HEK293 (cell line): ENCODE measurements at regions of chr17 and their contacts with region 1.

Region 1: DNA sequence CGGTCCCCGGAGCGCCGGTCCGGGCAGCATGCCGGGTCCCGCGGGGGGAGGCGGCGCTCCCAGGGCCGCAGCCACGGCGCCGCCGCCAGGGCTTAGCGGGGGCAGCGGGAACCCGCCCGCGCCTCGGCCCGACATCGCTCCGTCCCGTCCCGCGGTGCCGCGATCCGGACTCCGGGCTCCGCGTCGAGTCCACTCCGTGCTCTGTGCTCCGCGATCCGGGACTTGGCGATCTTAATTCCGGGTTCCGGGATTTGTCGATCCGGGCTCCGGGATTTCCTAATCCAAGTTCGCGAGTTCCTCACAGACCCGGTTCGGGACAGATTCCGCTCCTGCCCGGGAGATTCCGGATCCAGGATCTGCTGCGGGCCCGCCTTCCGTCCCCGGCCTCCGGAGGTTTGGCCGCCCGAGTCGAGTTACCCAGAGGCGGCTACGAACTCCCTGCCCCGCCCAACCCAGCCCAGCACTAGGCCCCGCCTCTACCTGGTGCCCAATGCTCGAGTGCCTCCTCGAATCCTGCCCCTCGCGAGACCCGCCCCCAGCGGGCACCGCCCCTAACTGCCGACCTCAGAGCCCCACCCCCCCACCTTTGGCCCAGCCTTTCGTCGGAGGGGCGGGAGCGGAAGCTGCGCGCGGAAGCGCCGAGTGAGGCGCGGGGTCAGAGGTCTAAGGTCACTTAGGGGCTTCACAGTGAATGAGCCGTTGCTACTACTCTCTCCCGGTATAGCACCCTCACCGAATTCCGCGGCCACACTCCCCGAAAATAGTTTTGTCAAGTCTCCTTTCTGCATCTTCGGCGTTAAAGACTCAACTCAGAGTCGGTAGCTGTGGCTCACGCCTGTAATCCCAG is at the start of gene SMARCD2:
- H3K4me3 ChIP-seq: peak within 1 kb of the TSS; percentile 93
- H3K27ac ChIP-seq: peak within 1 kb of the TSS; percentile 97
- H3K4me1 ChIP-seq: peaks cover 20% of the 10 kb centered on the region
- CTCF ChIP-seq: peak; percentile 55; the same call in 1 of the 2 replicates

Region 2: GRCh38 chr17:63600569-63601438 is 242.0 kb before region 1 on chr17 and contains the start of gene TACO1:
- CTCF ChIA-PET with region 1: no interaction called
- POLR2A ChIA-PET with region 1: no interaction called
- H3K4me3 ChIP-seq: peak within 1 kb of the TSS; percentile 92
- H3K27ac ChIP-seq: peak within 1 kb of the TSS; percentile 75
- H3K4me1 ChIP-seq: no peaks in the 10 kb centered on the region
- CTCF ChIP-seq: no peak; the same call in 1 of the 2 replicates

Region 3: GRCh38 chr17:63827002-63827771 is 15.6 kb before region 1 on chr17 and contains the starts of genes FTSJ3 and PSMC5:
- CTCF ChIA-PET with region 1: interaction called, 10 read pairs
- POLR2A ChIA-PET with region 1: interaction called, 65 read pairs
- H3K4me3 ChIP-seq: peak within 1 kb of the TSS; percentile 74
- H3K27ac ChIP-seq: peak within 1 kb of the TSS; percentile 87
- H3K4me1 ChIP-seq: peaks cover 3% of the 10 kb centered on the region; the same call in 1 of the 2 replicates
- CTCF ChIP-seq: peak; percentile 98

Region 4: GRCh38 chr17:63859257-63859656 is 16.5 kb after region 1 on chr17:
- CTCF ChIA-PET with region 1: interaction called, 62 read pairs
- POLR2A ChIA-PET with region 1: interaction called, 8 read pairs
- H3K4me3 ChIP-seq: no peak overlapping the region
- H3K27ac ChIP-seq: no peak overlapping the region
- H3K4me1 ChIP-seq: no peaks in the 10 kb centered on the region
- CTCF ChIP-seq: no peak

Region 5: DNA sequence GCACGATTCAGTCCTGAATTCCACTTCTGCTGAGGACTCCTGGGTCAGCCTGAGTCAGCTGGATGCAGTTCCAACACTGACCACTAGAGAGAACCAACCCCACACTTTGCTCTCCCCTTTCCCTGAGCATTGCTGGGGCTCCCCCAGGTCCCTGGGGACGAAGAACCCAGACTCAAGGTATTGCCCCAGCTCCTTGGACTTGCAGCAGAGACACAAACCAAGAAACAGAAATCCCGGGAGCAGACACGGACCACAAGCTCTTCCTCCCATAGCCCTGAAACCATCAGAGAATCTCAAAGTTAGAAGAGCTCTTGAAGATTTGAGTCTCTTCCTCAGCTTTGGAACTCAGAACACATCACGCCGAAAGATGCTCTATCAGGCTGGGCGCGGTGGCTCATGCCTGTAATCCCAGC is 76.6 kb after region 1 on chr17:
- CTCF ChIA-PET with region 1: no interaction called
- POLR2A ChIA-PET with region 1: no interaction called
- H3K4me3 ChIP-seq: no peak overlapping the region
- H3K27ac ChIP-seq: no peak overlapping the region
- H3K4me1 ChIP-seq: no peaks in the 10 kb centered on the region
- CTCF ChIP-seq: peak; percentile 38; the same call in 1 of the 2 replicates

Region 6: DNA sequence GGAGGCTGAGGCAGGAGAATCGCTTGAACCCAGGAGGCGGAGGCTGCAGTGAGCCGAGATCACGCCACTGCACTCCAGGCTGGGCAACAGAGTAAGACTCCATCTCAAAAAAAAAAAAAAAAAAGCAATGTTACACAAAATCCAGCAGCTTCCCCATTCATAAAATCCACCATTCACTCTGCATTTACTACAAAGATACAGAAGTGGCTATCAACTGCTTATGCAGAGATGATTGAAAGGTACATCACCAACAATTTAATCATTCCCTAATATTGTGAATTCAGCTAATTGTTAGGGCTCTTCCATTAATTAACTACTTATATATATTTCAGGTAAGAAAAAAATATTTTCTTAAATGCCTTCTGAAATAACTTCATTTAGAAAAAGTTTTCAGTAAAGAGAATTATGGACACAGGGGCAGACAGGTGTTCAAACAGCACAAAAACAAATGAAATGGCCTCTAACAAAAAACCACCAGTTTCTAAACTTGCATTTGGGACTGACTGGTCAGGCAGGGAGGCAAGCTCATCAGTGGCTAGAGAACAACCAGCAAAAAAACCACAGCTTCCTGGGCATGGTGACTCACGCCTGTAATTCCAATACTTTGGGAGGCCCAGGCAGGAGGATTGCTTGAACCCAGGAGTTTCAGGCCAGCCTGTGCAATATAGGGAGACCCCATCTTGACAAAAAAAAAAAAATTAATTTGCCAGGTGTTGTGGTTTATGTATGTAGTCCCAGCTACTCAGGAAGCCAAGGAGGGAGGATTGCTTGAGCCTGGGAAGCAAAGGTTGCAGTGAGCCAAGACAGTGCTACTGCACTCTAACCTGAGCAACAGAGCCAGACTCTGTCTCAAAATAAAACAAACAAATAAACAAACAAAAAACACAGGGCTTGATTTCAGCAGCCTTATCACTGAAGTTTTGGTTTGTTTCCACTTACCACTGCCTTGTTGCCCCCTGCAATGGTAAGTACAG is 260.9 kb after region 1 on chr17:
- CTCF ChIA-PET with region 1: no interaction called
- POLR2A ChIA-PET with region 1: no interaction called
- H3K4me3 ChIP-seq: no peak overlapping the region
- H3K27ac ChIP-seq: no peak overlapping the region
- H3K4me1 ChIP-seq: 0 out of 2 replicates have a peak, but pooled peaks cover 3% of the 10 kb centered on the region
- CTCF ChIP-seq: no peak

Region 7: DNA sequence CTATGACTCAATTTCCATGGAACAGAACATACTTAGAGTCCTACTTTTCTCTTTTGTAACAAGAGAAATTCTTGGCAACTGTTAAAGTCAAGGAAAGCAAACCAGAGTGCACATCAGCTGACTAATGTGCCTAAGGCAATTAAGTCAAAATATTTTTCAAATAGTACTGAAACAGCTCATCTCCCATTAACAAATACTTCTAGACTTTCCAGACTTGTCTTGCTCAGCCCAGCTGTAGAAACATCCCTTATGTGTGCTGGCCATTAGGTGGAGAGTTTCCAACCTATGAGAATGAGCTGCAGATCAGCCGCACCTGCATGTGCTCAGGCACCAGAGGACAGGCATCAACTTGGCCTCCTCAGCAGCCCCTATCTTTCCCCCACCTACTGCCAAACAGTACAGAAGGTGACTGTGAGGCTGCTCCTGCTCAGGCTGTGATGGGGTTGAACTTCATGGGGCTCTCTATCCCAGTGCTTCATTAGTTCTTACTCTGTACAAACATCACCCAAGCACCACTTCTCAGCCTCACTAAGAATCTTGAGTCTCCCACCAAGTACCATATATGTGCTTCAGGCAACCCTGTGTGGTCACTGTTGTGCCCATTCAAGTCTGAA is 388.1 kb after region 1 on chr17:
- CTCF ChIA-PET with region 1: no interaction called
- POLR2A ChIA-PET with region 1: no interaction called
- H3K4me3 ChIP-seq: no peak overlapping the region
- H3K27ac ChIP-seq: no peak overlapping the region
- H3K4me1 ChIP-seq: peaks cover 7% of the 10 kb centered on the region; the same call in 1 of the 2 replicates
- CTCF ChIP-seq: no peak